ENCODE measurements at regions of chr4 and their contacts with region 1.

Region 1: DNA sequence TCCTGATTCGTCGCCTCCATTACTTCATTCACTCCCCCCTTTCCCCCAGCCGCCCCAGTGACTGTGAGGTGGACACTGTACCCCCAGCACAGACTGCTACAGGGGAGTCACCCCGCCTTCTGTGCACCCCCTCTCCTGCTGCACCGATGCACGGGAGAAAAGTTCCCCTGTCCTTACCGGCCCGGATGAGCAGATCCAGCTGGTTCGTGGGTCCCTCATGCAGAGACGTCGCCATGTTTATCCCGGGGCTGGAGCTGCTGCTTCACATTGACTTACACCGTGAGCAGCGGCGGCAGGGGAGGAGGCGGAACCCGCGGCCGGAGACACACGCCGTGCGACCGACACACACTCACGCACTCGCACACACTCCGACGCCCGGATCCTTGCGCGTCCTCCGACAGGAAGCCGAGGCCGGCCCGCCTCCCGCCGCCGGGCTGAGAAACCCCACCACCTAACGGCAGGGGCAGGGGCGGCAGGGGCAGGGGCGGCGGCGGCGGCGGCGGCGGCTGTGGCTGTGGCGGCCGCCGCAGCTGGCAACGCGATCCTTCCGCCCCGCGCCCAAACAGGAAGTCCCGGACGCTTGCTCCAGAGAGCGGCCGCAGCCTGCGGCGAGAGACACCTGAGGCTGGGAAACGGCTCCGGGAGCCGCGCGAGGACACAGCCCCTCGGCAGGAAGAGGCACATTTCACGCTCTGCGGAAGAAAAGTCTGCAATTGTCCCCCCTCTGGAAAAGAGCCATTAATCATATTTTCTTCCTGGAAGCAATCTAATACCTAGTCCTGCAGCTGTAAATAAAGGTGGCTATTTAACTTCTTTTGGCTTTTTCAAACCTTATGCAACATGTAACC is 68.6 kb downstream of the NOCT start:
- DNase-seq: peak; percentile 78
- H3K4me3 Mint-ChIP-seq: peak overlapping the region; percentile 86
- H3K27ac Mint-ChIP-seq: peak overlapping the region; percentile 98
- H3K4me1 Mint-ChIP-seq: peaks cover 28% of the 10 kb centered on the region
- H3K27me3 Mint-ChIP-seq: no peaks in the 10 kb centered on the region

Region 2: DNA sequence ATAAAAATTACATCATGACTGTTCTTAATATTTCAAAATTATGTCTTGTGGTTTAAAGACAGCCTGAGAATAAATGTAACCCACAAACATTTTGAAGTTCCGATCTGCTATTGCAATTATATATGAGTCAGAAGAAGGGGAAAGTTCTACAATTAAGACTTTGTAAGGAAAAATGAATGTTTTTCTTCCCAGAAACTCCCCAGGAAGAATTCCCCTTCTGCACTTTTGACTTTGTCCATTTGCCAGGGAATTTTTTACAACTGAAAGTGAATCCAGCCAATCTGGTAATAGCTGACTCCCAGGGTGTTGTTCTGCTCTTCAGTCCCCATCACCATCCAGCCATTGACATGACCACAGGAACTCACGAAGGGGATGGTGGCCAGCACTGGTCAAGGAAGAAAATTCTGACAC is 130.2 kb before region 1 on chr4:
- intact Hi-C with region 1: no loop called
- DNase-seq: no peak
- H3K4me3 Mint-ChIP-seq: no peak overlapping the region
- H3K27ac Mint-ChIP-seq: no peak overlapping the region
- H3K4me1 Mint-ChIP-seq: peaks cover 8% of the 10 kb centered on the region
- H3K27me3 Mint-ChIP-seq: peaks cover 9% of the 10 kb centered on the region

Region 3: DNA sequence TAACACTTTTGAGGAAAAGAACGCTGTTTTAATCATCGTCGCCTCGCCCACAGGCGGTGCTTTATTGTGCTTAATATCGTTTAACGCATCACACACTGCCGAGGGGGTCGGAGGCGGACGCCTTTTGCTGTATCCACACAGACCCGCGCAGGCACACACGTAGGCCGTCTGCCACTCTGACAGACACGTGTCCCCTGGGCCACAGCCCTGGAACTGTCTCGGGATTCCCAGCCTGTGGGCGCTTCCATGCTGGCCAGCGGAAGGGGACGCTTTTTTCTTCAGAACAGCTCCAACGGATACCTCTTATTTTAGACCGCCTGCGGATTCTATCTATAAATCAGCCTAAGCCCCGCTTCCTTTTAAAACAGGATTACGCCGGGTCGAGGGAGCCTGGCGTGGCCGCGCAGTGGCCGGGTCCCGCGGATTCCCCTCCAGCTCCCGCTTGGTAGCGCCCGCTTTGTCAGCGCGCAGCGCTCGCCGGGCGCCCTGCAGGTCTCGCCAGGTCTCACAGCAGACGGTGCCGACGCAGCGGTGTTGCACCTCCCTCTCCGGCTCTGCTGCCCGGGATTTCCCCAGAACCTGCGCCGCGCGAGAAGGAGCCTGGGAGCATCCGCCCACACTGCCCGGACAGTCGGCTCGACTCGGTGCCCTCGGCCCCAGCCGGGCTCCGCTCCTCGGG is 68.8 kb before region 1 on chr4 and contains the start of gene NOCT:
- intact Hi-C with region 1: loop called (anchors 1 kb)
- DNase-seq: peak; percentile 90
- H3K4me3 Mint-ChIP-seq: peak within 1 kb of the TSS; percentile 96
- H3K27ac Mint-ChIP-seq: peak within 1 kb of the TSS; percentile 91
- H3K4me1 Mint-ChIP-seq: peaks cover 43% of the 10 kb centered on the region
- H3K27me3 Mint-ChIP-seq: no peaks in the 10 kb centered on the region
- total RNA-seq, gene NOCT: 24.1 and 26.9 TPM in 2 replicates

Region 4: GRCh38 chr4:139048026-139048425 is 36.2 kb before region 1 on chr4:
- intact Hi-C with region 1: loop called (anchors 5 kb)
- DNase-seq: no peak
- H3K4me3 Mint-ChIP-seq: no peak overlapping the region
- H3K27ac Mint-ChIP-seq: peak overlapping the region; percentile 29
- H3K4me1 Mint-ChIP-seq: peaks cover 7% of the 10 kb centered on the region
- H3K27me3 Mint-ChIP-seq: no peaks in the 10 kb centered on the region

Region 5: GRCh38 chr4:139295206-139295941 is 211.2 kb after region 1 on chr4:
- intact Hi-C with region 1: loop called (anchors 1 kb)
- DNase-seq: peak; percentile 92
- H3K4me3 Mint-ChIP-seq: peak overlapping the region; percentile 93
- H3K27ac Mint-ChIP-seq: peak overlapping the region; percentile 94
- H3K4me1 Mint-ChIP-seq: peaks cover 39% of the 10 kb centered on the region
- H3K27me3 Mint-ChIP-seq: no peaks in the 10 kb centered on the region

Region 6: GRCh38 chr4:139453371-139454110 is 369.4 kb after region 1 on chr4:
- intact Hi-C with region 1: loop called (anchors 1 kb)
- DNase-seq: peak; percentile 95
- H3K4me3 Mint-ChIP-seq: peak overlapping the region; percentile 94
- H3K27ac Mint-ChIP-seq: peak overlapping the region; percentile 99
- H3K4me1 Mint-ChIP-seq: peaks cover 58% of the 10 kb centered on the region
- H3K27me3 Mint-ChIP-seq: no peaks in the 10 kb centered on the region

Region 7: GRCh38 chr4:140523857-140524742 is 1439.9 kb after region 1 on chr4 and contains the start of gene ELMOD2:
- intact Hi-C with region 1: loop called (anchors 5 kb)
- DNase-seq: peak; percentile 97
- H3K4me3 Mint-ChIP-seq: peak within 1 kb of the TSS; percentile 88
- H3K27ac Mint-ChIP-seq: peak within 1 kb of the TSS; percentile 55
- H3K4me1 Mint-ChIP-seq: peaks cover 19% of the 10 kb centered on the region
- H3K27me3 Mint-ChIP-seq: no peaks in the 10 kb centered on the region
- total RNA-seq, gene ELMOD2: 10.8 and 15.7 TPM in 2 replicates